CD4-positive, alpha-beta memory T cell (primary cell): ENCODE measurements at regions of chr21 and their contacts with region 1.

Region 1: DNA sequence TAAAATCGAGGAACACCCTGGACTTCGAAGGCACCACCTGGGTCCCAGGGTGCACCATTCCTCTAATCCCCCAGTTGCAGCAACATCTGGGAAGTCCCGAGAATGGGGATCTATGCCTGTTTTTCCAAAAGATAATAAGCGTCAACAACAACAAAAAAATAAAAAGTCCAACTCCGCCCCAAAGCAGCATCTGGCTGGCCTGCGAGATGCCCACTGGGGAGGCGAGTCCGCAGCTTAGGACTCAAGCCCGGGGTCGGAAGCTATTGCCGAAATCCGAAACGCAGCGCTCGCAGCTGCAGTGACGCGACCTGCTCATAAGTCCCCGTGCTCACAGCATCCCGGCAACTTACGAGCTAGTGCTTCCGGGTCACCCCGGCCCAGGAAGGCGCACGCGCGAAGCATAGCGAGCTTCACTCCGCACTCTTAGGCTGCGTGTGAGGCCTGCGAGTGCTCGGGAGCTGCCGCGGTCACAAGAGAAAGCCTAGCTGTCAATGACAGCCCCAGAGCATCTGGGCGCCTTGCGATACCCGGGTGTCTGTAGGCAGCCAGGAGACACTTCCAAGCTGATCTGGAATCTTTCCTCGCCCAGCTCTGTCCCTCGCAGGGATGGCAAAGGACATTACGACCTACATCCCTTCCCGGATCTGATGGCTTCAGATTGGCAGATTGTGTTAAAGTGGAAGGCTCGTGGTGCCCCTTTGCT is 9.9 kb upstream of the LTN1 start:
- DNase-seq: peak; percentile 91 to 97 (median 95)
- H3K4me3 ChIP-seq: peak overlapping the region; percentile 85 to 88
- H3K4me3 Mint-ChIP-seq: peak overlapping the region; percentile 89 to 95 (median 92)
- H3K27ac ChIP-seq: peak overlapping the region; percentile 95
- H3K27ac Mint-ChIP-seq: peak overlapping the region; percentile 98 to 99 (median 99)
- H3K4me1 ChIP-seq: peaks cover 8% of the 10 kb centered on the region
- H3K4me1 Mint-ChIP-seq: peaks cover 2 to 14% (median 6%) of the 10 kb centered on the region in 4 donors
- H3K27me3 ChIP-seq: no peaks in the 10 kb centered on the region
- H3K27me3 Mint-ChIP-seq: no peaks in the 10 kb centered on the region

Region 2: DNA sequence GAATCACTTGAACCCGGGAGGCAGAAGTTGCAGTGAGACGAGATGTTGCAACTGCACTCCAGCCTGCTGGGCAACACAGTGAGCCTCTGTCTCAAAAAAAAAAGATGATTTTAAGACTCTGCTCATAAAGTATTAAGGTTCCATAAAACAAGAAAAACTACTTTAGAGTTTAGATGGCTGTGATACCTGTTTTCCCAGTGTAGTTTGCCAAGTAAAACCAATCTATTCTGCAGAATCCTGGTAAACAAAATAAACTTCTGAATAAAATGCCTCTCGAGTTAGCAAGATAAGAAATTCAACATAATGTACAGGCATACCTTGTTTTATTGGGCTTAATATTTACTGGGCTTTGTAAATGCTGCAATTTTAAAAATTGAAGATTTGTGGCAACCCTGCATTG is 40.7 kb before region 1 on chr21:
- CTCF ChIA-PET with region 1: no interaction called
- POLR2A ChIA-PET with region 1: no interaction called
- intact Hi-C with region 1: no loop called
- DNase-seq: no peak
- H3K4me3 ChIP-seq: no peak overlapping the region
- H3K4me3 Mint-ChIP-seq: no peak overlapping the region
- H3K27ac ChIP-seq: no peak overlapping the region
- H3K27ac Mint-ChIP-seq: peak overlapping the region in 1 of 7 donors; percentile 83
- H3K4me1 ChIP-seq: no peaks in the 10 kb centered on the region
- H3K4me1 Mint-ChIP-seq: peaks cover 0 to 6% (median 3%) of the 10 kb centered on the region in 4 donors
- H3K27me3 ChIP-seq: no peaks in the 10 kb centered on the region
- H3K27me3 Mint-ChIP-seq: no peaks in the 10 kb centered on the region

Region 3: DNA sequence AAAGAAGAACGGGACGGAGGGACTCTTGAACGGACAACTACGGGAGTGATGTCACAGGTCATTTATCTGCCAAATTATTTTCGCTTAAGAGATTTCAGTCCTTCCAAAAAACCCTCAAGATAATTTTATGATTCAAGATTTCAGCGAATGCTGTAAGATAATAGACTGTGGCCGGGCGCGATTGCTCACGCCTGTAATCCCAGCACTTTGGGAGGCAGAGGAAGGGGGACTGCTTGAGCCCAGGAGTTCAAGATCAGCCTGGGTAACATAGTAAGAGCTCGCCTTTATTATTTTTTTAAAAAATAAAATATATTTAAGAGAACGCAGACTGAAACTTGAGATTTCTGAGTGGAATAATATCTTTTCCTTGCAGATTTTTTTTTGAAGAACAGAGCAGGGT is 15.9 kb after region 1 on chr21:
- CTCF ChIA-PET with region 1: interaction called, 12 read pairs
- POLR2A ChIA-PET with region 1: interaction called, 383 read pairs
- intact Hi-C with region 1: loop called (anchors 1 kb)
- DNase-seq: no peak
- H3K4me3 ChIP-seq: peak overlapping the region; percentile 68 to 93
- H3K4me3 Mint-ChIP-seq: peak overlapping the region; percentile 82 to 94 (median 92)
- H3K27ac ChIP-seq: peak overlapping the region; percentile 92
- H3K27ac Mint-ChIP-seq: peak overlapping the region; percentile 78 to 99 (median 96)
- H3K4me1 ChIP-seq: peaks cover 39% of the 10 kb centered on the region
- H3K4me1 Mint-ChIP-seq: peaks cover 19 to 52% (median 38%) of the 10 kb centered on the region in 4 donors
- H3K27me3 ChIP-seq: no peaks in the 10 kb centered on the region
- H3K27me3 Mint-ChIP-seq: no peaks in the 10 kb centered on the region

Region 4: DNA sequence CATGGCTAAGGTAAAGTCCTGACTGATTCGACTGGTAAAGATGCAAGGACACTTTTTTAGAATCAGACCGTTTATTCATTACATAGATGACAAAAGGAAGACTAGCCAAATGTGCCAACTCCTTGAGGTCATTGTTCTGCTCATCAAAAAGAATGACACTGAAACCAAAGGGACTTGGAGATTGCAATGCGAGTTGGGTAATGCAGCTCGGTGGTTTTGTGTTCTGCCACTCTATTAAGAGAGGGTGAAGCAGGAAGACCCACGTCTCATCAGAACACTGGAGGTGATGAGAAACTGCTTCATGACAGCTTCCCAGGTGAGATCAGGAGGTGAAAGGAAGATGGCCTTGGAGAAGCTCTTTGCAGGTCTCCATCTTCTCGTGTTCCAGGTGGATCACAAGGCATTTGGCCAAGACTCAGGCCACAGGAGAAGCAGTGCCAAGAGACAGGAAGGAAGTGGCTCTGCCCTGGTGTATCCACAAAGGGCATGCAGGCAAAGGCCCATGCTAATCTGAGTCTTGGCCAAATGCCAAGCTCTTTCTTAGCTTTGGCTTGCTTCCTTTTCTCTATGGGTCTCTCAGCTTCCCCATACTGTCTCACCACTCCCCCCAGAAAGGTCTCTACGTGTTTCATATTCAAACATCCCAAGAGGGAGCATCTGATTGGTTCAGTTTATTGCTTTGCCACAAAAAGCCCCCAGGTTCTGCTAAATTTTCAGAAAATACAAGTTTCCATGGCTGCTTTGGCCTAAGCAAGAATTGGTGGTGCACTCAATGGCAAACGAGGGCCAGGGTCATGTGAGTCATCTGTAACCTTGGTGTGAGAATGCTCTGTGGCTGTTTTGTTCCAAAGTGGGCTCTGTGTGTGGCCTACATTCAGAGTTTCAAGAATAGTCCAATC is 76.5 kb after region 1 on chr21:
- CTCF ChIA-PET with region 1: interaction called, 5 read pairs
- POLR2A ChIA-PET with region 1: interaction called, 39 read pairs
- intact Hi-C with region 1: no loop called
- DNase-seq: peak; percentile 37 to 44 (median 40)
- H3K4me3 ChIP-seq: no peak overlapping the region
- H3K4me3 Mint-ChIP-seq: peak overlapping the region; percentile 37 to 79 (median 70)
- H3K27ac ChIP-seq: peak overlapping the region; percentile 33
- H3K27ac Mint-ChIP-seq: peak overlapping the region; percentile 88 to 95 (median 93)
- H3K4me1 ChIP-seq: peaks cover 53% of the 10 kb centered on the region
- H3K4me1 Mint-ChIP-seq: peaks cover 22 to 71% (median 48%) of the 10 kb centered on the region in 4 donors
- H3K27me3 ChIP-seq: no peaks in the 10 kb centered on the region
- H3K27me3 Mint-ChIP-seq: no peaks in the 10 kb centered on the region

Region 5: DNA sequence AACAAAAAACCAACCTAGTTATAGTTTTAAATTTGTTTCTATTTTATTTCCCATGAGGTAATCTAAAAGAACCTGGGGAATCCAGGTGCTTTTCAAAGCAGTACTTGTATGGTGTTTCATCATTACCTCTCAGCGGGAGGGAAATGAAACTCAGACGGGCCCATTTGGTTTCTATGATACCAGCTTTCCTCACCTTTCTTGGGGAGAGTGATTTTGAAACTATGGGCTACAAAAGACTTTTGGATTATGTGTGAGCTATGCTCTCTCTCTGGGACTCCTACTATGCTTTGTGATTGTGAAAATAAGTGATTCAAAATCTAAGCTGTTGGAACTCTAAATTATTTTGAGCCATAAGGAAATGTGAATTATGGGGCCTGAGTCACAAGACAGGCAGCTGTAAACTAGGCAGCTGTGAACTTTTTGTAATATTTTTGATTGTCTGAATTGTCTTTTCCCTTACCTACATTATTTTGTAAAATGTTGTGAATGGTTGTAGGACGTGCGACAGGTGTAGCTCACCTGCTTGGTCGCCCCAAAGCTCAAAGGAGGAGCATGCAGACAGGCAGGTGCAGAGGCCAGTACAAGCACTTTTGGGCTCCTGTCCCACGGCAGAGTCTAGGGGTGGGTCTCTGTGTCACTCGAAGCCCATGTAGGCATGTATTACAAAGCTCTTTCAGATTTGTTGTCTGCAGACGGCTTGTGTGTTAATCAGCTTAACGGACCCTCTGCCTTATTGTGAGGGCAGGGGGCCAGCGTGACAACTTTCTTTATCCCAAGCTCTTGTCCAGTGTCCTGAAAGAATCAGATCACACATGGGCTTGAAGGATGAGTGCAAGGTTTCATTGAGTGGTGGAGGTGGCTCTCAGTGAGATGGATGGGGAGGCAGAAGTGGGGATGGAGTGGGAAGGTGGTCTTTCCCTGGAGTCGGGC is 231.3 kb after region 1 on chr21:
- CTCF ChIA-PET with region 1: no interaction called
- POLR2A ChIA-PET with region 1: no interaction called
- intact Hi-C with region 1: no loop called
- DNase-seq: peak in 1 of 5 donors; percentile 29
- H3K4me3 ChIP-seq: no peak overlapping the region
- H3K4me3 Mint-ChIP-seq: no peak overlapping the region
- H3K27ac ChIP-seq: no peak overlapping the region
- H3K27ac Mint-ChIP-seq: no peak overlapping the region
- H3K4me1 ChIP-seq: peaks cover 5% of the 10 kb centered on the region
- H3K4me1 Mint-ChIP-seq: peaks cover 0 to 9% (median 4%) of the 10 kb centered on the region in 4 donors
- H3K27me3 ChIP-seq: no peaks in the 10 kb centered on the region
- H3K27me3 Mint-ChIP-seq: peaks cover 0 to 3% of the 10 kb centered on the region in 2 donors